ENCODE measurements at regions of chr2 and their contacts with region 1.

Region 1: DNA sequence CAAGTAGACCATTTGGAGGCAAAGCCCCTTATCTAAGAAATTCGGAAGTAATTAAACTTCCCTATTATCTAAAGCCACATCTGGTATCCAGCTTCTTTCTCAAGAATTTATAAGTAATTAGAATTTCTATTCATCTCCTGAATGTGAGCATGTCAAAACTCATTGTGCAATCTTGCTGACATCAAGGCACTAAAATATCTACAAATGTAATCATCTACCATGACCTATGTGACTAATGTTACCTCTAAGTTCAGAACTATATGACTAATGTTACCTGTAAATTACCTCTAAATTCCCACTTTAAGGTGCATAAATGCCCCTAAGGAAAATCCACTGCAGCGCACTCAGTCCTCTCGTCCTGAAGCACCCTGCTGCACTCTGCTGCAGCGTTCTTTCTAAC is 773.0 kb downstream of the CPS1 start:
- DNase-seq: peak; percentile 17
- H3K4me3 ChIP-seq: no peak overlapping the region
- H3K27ac ChIP-seq: no peak overlapping the region
- H3K4me1 ChIP-seq: peaks cover 4% of the 10 kb centered on the region
- H3K27me3 ChIP-seq: no peaks in the 10 kb centered on the region
- CTCF ChIP-seq: no peak

Region 2: GRCh38 chr2:211387734-211388133 is 58.3 kb after region 1 on chr2:
- dilution Hi-C with region 1: loop called (anchors 10 kb)
- DNase-seq: no peak
- H3K4me3 ChIP-seq: no peak overlapping the region
- H3K27ac ChIP-seq: no peak overlapping the region
- H3K4me1 ChIP-seq: no peaks in the 10 kb centered on the region
- H3K27me3 ChIP-seq: no peaks in the 10 kb centered on the region
- CTCF ChIP-seq: no peak